Dorsolateral prefrontal cortex (tissue), 120 donors: ENCODE measurements at regions of chr3 and their contacts with region 1.

Region 1: DNA sequence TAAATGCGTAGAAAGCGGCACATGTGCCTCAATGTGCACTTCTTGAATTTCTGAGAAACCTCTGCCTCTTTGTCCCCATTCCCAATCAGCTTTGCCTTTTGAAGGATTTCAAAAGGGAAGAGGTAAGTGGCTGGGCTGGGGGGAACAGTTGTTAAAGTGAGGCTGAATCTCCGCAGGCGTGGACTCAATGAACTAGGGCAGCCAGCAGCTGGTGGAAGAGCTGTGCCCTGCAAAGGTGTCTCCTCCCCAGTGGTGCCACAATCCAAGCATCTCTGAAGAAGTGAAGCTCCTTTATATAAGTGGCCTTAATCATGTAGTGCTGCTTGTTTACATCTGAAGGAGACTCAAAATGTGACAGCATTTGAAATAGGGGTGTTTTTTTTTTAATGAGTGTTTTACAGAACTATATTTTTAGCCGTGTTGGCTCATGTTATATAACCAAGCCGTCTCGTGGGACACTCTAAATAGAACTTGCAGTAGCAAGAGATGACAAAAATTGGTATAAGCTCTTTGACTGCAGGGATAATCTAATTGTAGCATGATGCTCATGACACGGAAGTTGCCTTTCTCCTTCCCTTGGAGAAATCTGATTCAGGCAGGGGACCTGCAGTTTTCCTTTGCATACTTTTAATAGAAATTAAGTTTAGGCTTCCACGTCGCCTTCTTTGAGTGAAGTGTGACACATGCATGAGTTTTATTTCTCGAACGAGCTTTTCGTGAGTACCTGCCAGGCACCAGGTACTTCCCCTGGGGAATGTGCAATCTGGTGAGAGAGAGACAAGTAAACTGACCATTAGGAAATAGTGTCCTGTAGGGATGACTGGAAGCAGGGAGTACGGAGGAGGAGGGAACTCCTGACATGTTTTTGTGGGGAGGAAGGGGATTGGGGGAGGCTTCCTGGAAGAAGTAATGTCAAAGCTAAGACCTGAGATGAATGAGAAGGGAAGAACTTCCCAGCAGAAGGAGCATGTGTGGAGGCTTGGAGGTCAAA is 179.7 kb upstream of the BHLHE40 start:
- DNase-seq: peak in 2 of 10 donors; percentile 45 to 57
- H3K4me3 ChIP-seq: no peak overlapping the region
- H3K27ac ChIP-seq: peak overlapping the region in 56 of 59 donors; percentile 22 to 89 (median 72)
- H3K27me3 ChIP-seq: no peaks in the 10 kb centered on the region
- CTCF ChIP-seq: no peak

Region 2: DNA sequence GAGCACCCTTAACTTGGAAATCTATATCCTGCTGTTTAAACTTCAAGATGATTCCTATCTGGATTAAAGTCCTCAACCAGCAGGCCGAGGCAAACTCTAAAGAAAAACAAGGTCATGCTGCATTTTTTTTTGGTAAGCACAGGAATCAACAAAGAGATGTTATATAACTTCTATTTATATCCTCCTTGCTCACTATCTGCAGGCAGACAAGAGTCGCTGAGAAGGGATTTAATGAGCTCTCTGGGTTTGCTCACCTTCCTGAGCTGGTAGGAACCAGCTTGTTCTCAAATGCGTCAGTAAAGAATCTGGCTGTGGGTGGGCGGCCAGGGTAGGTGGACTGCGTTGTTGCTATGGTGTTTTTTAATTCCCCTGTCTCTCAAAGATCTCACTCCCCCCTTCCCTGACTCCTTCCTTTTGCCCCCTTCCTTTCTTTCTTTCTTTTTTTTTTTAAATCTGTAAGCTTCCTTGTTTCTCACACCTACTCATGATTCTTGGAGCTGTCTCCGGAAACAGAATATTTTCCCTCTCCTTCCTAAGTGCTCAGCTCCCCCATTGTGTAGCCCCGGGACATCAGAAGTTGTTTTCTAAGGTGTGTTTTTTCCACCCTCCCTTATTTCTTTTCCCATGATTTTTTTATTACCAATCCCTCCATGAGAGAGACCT is 49.1 kb before region 1 on chr3:
- intact Hi-C with region 1: loop called in 1 of 2 experiments (anchors 1 kb)
- DNase-seq: peak in 9 of 10 donors; percentile 47 to 83 (median 73)
- H3K4me3 ChIP-seq: peak overlapping the region in 1 of 59 donors; percentile 16
- H3K27ac ChIP-seq: peak overlapping the region in 58 of 59 donors; percentile 51 to 97 (median 82)
- H3K27me3 ChIP-seq: no peaks in the 10 kb centered on the region
- CTCF ChIP-seq: no peak